Psoas muscle (tissue), 8 donors: ENCODE measurements at regions of chr1 and their contacts with region 1.

Region 1: DNA sequence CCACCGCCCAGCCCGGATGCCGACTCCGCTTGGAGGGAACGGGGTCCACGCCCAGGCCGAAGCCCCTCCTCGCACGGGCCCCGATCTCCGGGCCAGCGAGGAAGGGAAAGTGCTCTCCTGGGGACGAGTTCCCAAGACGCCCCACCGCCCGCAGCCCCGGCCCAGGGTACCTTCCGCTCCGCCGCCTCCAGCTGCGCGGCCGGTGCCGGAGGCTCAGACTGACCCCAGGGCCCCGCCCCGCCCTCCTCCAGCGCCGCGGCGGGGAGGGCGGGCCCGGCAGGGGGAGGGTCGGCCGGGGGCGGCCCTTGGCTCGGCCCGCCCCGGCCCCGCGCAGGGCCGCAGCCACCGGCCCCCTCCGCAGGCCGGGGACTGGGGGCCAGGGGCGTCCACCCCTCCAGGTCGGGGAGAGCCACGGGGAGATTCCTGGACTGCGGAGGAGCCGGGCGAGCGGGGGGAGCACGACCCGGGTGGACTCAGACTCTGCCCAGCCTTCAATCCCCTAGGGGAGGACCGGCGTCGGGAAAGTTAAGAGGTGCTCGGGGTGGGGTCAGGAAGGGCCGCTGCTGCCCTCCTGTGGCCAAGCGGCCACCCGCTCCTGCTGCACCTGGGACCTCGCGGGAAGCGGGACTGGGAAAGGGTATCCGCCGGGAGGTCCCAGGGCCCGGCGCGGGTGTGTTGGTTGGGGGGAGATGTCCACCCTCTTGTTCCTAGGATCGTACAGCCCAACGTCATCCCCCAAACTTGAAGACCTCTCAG is at the start of gene RHOC:
- DNase-seq: peak; percentile 89 to 93
- ATAC-seq: peak; percentile 84 to 91 (median 90)
- H3K4me3 ChIP-seq: peak within 1 kb of the TSS; percentile 83
- H3K27ac ChIP-seq: peak within 1 kb of the TSS; percentile 83
- H3K4me1 ChIP-seq: peaks cover 22% of the 10 kb centered on the region
- H3K27me3 ChIP-seq: no peaks in the 10 kb centered on the region
- CTCF ChIP-seq: peak; percentile 90
- total RNA-seq, gene RHOC: 43.5 to 88.3 (median 75.5) TPM

Region 2: GRCh38 chr1:112501810-112502641 is 205.1 kb before region 1 on chr1:
- intact Hi-C with region 1: loop called (anchors 2 to 5 kb)
- DNase-seq: peak; percentile 72 to 77
- ATAC-seq: peak; percentile 77 to 94 (median 81)
- H3K4me3 ChIP-seq: peak overlapping the region; percentile 72
- H3K27ac ChIP-seq: no peak overlapping the region
- H3K4me1 ChIP-seq: peaks cover 9% of the 10 kb centered on the region
- H3K27me3 ChIP-seq: peaks cover 0 to 52% (median 7%) of the 10 kb centered on the region in 3 donors
- CTCF ChIP-seq: peak; percentile 54

Region 3: DNA sequence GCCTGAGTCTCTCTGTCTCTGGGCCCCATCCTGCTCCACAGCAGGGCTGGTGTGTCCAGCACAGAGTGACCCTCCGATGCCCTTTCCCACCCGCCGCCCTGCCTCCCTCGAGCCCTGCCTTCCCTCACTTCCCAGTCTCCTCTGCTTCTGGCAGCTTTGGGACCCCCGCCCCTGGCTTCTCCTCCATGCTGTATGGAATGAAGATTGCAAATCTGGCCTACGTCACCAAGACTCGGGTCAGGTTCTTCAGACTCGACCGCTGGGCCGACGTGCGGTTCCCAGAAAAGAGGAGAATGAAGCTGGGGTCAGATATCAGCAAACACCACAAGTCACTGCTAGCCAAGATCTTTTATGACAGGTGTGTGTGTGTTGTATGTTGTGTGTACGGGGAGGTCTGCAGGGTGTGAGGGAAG is 18.3 kb before region 1 on chr1:
- intact Hi-C with region 1: no loop called
- DNase-seq: peak in 1 of 2 donors; percentile 64
- ATAC-seq: peak in 3 of 4 donors; percentile 30 to 65 (median 31)
- H3K4me3 ChIP-seq: no peak overlapping the region
- H3K27ac ChIP-seq: peak overlapping the region; percentile 30
- H3K4me1 ChIP-seq: peaks cover 5% of the 10 kb centered on the region
- H3K27me3 ChIP-seq: no peaks in the 10 kb centered on the region
- CTCF ChIP-seq: no peak